HCT116 (cell line): ENCODE measurements at regions of chr10 and their contacts with region 1.

Region 1: GRCh38 chr10:110311357-110311949 is 6.7 kb upstream of the SMNDC1 start:
- DNase-seq: peak; percentile 80
- ATAC-seq: peak; percentile 90
- H3K4me3 ChIP-seq: no peak overlapping the region
- H3K27ac ChIP-seq: no peak overlapping the region
- H3K4me1 ChIP-seq: peaks cover 2 to 20% of the 10 kb centered on the region in 2 experiments; a peak in 2 of 4 replicates
- H3K27me3 ChIP-seq: no peaks in the 10 kb centered on the region
- CTCF ChIP-seq: peak; percentile 73 to 96 (median 90)
- POLR2A ChIP-seq: no peak
- RAD21 ChIP-seq: peak; percentile 99

Region 2: GRCh38 chr10:110326351-110327032 is 15.0 kb after region 1 on chr10:
- CTCF ChIA-PET with region 1: no interaction called
- POLR2A ChIA-PET with region 1: no interaction called
- RAD21 ChIA-PET with region 1: no interaction called
- intact Hi-C with region 1: no loop called
- DNase-seq: peak; percentile 24
- ATAC-seq: no peak; the same call in 1 of the 2 replicates
- H3K4me3 ChIP-seq: no peak overlapping the region
- H3K27ac ChIP-seq: no peak overlapping the region
- H3K4me1 ChIP-seq: peaks cover 0 to 28% of the 10 kb centered on the region in 2 experiments; a peak in 2 of 4 replicates
- H3K27me3 ChIP-seq: no peaks in the 10 kb centered on the region
- CTCF ChIP-seq: no peak
- POLR2A ChIP-seq: no peak
- RAD21 ChIP-seq: no peak

Region 3: DNA sequence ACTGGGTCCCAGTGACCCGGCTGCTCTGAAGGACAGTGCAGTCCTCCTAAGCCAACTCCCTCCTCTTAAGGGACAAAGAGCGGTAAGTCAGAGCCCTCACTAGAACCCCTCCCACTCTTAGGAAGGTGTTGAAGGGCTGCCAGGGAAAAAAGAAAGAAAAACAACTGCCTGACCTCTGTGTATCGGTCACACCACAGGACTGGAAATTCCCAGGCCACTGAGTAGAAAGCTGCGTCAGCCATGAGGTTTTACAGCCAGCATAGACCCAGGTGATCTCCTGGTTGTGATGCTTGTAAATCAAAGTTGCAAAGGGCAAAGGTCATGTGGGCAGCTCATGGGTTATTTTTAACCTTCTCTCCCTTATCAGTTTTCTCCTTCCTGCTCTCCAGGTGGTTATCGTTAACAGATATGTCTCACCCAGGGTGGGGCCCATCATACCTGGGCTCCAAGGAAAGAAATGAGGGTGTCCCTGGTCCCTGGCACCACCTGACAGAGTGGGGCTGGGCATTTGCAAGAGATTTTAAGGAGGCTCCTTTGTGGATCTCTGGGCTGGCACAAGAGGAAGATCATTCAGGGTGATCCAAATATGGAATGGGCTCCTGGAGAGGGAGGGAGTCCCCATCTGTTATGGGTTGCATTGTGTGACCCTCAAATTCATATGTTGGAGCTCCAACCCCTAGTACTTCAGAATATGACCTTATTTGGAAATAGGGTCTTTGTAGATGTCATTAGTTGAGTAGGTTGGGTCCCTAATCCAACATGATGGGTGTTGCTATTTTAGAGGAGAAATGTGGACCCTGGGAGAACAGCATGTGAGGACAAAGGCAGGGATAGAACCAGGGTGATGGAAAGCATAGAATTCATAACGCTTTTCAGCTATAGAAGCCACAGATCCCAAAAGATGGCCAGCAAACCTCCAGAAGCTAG is 84.5 kb after region 1 on chr10:
- CTCF ChIA-PET with region 1: interaction called, 3 read pairs
- POLR2A ChIA-PET with region 1: no interaction called
- RAD21 ChIA-PET with region 1: no interaction called
- intact Hi-C with region 1: loop called (anchors 5 kb)
- DNase-seq: peak; percentile 96
- ATAC-seq: peak; percentile 58
- H3K4me3 ChIP-seq: peak overlapping the region in 1 of 2 experiments; percentile 19; a peak in 2 of 4 replicates
- H3K27ac ChIP-seq: peak overlapping the region; percentile 71
- H3K4me1 ChIP-seq: peaks cover 69 to 85% of the 10 kb centered on the region in 2 experiments
- H3K27me3 ChIP-seq: no peaks in the 10 kb centered on the region
- CTCF ChIP-seq: no peak
- POLR2A ChIP-seq: no peak
- RAD21 ChIP-seq: no peak

Region 4: DNA sequence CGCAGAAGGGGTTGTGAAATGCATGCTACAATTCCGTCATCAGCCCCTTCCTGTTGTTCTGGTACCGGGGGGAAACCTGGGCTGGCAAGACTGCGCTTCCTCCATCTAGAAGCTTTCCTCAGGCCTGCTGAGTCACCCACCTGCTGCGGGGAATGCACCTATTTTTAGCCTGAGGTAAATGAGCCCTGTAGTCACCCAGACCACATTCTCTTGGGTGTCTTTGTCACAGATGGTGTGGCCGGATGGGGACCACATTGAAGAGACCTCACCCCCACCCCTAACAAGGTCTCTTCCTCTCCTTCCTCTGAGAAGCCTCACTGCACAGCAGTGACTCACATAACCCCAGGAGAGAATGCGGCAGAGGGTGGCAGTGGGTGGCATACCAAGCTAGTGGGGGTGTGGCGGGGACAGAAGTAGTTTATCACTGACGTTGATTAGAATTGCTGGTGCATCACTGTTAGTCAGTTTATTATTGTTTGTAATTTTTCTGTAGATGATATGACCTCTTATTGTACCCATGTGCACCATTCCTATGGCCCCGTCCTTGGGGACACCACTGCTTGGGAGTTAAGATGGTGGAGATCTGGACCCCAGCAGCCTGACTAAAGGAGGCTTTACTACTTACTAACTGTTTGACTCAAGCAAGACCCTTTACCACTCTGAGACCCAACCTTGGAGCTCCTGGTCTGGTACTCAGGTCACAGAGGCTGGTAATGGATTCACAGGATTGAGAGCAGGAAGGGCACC is 103.3 kb after region 1 on chr10:
- CTCF ChIA-PET with region 1: no interaction called
- POLR2A ChIA-PET with region 1: interaction called, 6 read pairs
- RAD21 ChIA-PET with region 1: no interaction called
- intact Hi-C with region 1: loop called (anchors 5 kb)
- DNase-seq: peak; percentile 98
- ATAC-seq: peak; percentile 70
- H3K4me3 ChIP-seq: peak overlapping the region in 1 of 2 experiments; percentile 32; a peak in 2 of 4 replicates
- H3K27ac ChIP-seq: peak overlapping the region; percentile 95
- H3K4me1 ChIP-seq: peaks cover 84 to 92% of the 10 kb centered on the region in 2 experiments
- H3K27me3 ChIP-seq: no peaks in the 10 kb centered on the region
- CTCF ChIP-seq: no peak
- POLR2A ChIP-seq: peak; percentile 18
- RAD21 ChIP-seq: no peak

Region 5: DNA sequence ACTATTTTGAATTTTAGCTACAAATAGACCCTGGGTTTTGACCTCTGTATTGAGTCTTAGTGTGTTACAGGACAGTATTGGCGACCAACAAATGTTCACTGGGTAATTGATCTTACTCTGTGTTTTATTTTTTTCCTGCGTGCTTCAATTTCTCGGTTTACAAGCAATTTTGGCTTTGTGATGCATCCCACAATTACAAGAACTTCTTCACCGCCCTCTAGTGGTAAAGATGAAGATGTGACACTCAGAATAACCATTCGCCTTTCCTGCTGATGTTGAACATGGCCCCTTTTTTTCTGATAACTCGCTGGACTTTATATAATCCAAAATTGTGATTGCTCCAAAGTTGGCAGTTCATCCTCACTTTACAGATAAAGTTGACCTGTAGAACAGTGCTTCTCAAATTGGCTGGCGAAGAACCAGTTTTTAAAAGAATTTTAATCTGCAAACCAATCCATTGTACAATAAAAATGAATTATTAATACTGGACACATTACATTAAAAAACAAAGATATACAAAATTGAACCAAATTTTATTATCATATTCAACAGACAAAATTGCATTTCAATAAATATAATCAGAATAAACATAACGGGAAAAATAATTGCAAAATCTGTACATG is 235.8 kb after region 1 on chr10:
- CTCF ChIA-PET with region 1: interaction called, 19 read pairs
- POLR2A ChIA-PET with region 1: interaction called, 7 read pairs
- RAD21 ChIA-PET with region 1: interaction called in 1 of 2 experiments, 5 read pairs
- intact Hi-C with region 1: loop called (anchors 1 kb)
- DNase-seq: peak; percentile 66
- ATAC-seq: peak; percentile 85
- H3K4me3 ChIP-seq: no peak overlapping the region
- H3K27ac ChIP-seq: no peak overlapping the region
- H3K4me1 ChIP-seq: peaks cover 0 to 7% of the 10 kb centered on the region in 2 experiments; a peak in 2 of 4 replicates
- H3K27me3 ChIP-seq: no peaks in the 10 kb centered on the region
- CTCF ChIP-seq: peak; percentile 82 to 98 (median 91)
- POLR2A ChIP-seq: no peak
- RAD21 ChIP-seq: peak; percentile 98

Region 6: DNA sequence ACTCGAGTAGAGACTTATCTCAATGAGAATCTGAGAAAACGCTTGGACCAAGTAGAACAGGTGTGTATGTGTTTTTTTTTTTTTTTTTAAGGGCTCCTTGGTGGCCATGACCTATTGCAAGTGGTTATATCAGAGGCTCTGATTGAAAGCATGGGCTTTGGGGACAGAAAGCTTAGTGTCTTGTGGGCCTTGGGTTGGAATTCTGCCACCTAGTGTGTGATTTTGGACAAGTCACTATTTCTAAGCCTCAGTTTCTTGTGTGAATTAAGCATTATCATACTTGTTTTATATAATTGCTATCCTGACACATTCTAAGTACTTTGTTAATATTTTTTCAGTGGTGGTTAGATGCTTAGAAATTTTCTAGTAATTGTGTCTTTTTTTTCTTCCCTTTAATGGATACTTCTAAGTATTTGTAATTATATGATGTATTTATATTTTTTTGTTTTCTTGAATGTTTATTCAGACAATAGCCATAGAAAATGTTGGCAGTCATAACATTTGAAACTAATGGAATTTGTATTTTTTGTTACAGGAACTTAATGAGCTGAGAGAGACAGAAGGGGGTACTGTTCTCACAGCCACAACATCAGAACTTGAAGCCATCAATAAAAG is 289.1 kb after region 1 on chr10:
- CTCF ChIA-PET with region 1: interaction called, 47 read pairs
- POLR2A ChIA-PET with region 1: no interaction called
- RAD21 ChIA-PET with region 1: interaction called in 1 of 2 experiments, 3 read pairs
- intact Hi-C with region 1: loop called (anchors 1 kb)
- DNase-seq: peak; percentile 87
- ATAC-seq: peak; percentile 98
- H3K4me3 ChIP-seq: no peak overlapping the region
- H3K27ac ChIP-seq: no peak overlapping the region
- H3K4me1 ChIP-seq: no peaks in the 10 kb centered on the region
- H3K27me3 ChIP-seq: no peaks in the 10 kb centered on the region
- CTCF ChIP-seq: peak; percentile 73 to 86 (median 85)
- POLR2A ChIP-seq: no peak
- RAD21 ChIP-seq: peak; percentile 74

Region 7: DNA sequence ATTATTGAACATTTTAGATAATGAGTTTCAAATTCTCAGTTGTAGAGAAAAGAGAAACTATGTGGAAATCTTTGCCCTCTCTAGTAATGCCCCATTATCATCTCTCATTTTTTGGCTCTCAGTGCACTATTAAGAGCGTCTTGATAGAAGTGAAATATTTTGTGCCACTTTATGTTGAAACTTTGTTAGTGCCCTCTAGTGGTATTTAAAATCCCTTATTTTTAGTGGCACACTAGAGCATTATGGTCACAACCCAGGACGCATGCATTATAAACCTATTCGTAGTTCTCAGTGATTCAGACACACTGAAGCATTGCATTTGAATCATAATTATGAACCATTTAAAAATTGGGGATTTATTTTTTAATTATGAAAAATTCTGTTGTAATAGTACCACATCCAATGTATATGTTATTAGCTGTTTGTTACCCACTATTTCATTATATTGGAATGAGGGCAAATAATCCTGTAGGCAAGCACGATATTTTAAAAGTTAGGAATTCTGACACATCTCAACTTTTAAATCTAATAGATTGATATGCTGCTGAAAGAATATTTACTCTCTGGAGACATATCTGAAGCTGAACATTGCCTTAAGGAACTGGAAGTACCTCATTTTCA is 582.2 kb after region 1 on chr10:
- CTCF ChIA-PET with region 1: no interaction called
- POLR2A ChIA-PET with region 1: no interaction called
- RAD21 ChIA-PET with region 1: no interaction called
- intact Hi-C with region 1: loop called (anchors 5 kb)
- DNase-seq: peak; percentile 45
- ATAC-seq: peak; percentile 94
- H3K4me3 ChIP-seq: no peak overlapping the region
- H3K27ac ChIP-seq: no peak overlapping the region
- H3K4me1 ChIP-seq: no peaks in the 10 kb centered on the region
- H3K27me3 ChIP-seq: no peaks in the 10 kb centered on the region
- CTCF ChIP-seq: peak; percentile 56 to 78 (median 73)
- POLR2A ChIP-seq: no peak
- RAD21 ChIP-seq: peak; percentile 77